Stomach (tissue), 19 donors: ENCODE measurements at regions of chr6 and their contacts with region 1.

Region 1: DNA sequence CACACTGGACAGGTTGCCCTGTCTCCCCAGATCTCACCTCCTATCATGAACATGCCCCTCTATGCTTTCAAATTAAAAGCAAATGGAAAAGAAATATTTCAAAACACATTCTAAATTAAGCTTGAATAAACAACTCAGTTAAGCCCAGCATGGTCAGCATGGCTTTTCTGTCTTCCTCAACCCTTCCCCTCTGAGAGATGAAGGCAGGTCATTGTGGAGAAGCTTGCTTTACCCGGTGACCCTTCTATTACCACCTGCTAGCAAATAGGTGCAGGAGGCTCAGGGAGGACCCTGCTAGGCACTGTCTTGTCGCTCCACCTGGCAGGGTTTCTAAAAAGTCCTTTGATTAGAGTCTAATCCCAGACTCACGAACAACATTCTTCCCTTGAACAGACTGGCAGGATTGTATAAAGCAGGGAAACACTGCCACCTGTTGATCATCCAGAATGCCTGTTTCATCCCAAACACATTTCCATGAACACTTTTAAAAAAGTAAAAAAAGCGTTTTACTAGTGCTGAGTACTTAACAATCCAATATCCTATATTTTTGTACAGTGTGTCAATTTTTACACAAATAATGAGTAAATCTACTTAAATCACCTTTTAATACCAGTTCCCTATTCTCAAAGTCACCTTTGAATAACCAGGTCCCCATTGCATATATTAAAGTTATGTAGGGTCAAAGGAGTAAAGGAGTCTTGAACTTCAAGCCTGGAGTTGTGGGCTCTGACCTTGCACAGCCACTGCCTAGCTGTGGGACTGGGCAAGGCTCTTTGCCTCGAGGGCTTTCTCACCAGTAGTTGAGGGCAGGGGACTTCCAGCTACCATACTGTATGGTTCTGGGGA is 75.5 kb downstream of the GPR6 start:
- DNase-seq: peak in 1 of 2 donors; percentile 83
- H3K4me3 ChIP-seq: no peak overlapping the region
- H3K27ac ChIP-seq: no peak overlapping the region
- H3K4me1 ChIP-seq: peaks cover 0 to 9% (median 0%) of the 10 kb centered on the region in 4 donors
- H3K27me3 ChIP-seq: peaks cover 0 to 5% (median 0%) of the 10 kb centered on the region in 3 donors
- CTCF ChIP-seq: peak in 5 of 7 experiments; percentile 30 to 61 (median 45)
- EP300 ChIP-seq: no peak
- POLR2A ChIP-seq: no peak

Region 2: GRCh38 chr6:109526905-109527628 is 526.6 kb before region 1 on chr6:
- intact Hi-C with region 1: loop called (anchors 5 kb)
- DNase-seq: peak; percentile 33 to 86
- H3K4me3 ChIP-seq: no peak overlapping the region
- H3K27ac ChIP-seq: no peak overlapping the region
- H3K4me1 ChIP-seq: no peaks in the 10 kb centered on the region
- H3K27me3 ChIP-seq: no peaks in the 10 kb centered on the region
- CTCF ChIP-seq: peak in 3 of 7 experiments; percentile 35 to 41 (median 37)
- EP300 ChIP-seq: no peak
- POLR2A ChIP-seq: no peak